ENCODE measurements at regions of chr7 and their contacts with region 1.

Region 1: GRCh38 chr7:151315038-151315655 is 26.5 kb upstream of the NUB1 start:
- DNase-seq: peak; percentile 75
- ATAC-seq: peak; percentile 76
- H3K4me3 Mint-ChIP-seq: no peak overlapping the region
- H3K27ac Mint-ChIP-seq: no peak overlapping the region
- H3K4me1 Mint-ChIP-seq: no peaks in the 10 kb centered on the region
- H3K27me3 Mint-ChIP-seq: peaks cover 6% of the 10 kb centered on the region
- CTCF ChIP-seq: peak; percentile 83

Region 2: DNA sequence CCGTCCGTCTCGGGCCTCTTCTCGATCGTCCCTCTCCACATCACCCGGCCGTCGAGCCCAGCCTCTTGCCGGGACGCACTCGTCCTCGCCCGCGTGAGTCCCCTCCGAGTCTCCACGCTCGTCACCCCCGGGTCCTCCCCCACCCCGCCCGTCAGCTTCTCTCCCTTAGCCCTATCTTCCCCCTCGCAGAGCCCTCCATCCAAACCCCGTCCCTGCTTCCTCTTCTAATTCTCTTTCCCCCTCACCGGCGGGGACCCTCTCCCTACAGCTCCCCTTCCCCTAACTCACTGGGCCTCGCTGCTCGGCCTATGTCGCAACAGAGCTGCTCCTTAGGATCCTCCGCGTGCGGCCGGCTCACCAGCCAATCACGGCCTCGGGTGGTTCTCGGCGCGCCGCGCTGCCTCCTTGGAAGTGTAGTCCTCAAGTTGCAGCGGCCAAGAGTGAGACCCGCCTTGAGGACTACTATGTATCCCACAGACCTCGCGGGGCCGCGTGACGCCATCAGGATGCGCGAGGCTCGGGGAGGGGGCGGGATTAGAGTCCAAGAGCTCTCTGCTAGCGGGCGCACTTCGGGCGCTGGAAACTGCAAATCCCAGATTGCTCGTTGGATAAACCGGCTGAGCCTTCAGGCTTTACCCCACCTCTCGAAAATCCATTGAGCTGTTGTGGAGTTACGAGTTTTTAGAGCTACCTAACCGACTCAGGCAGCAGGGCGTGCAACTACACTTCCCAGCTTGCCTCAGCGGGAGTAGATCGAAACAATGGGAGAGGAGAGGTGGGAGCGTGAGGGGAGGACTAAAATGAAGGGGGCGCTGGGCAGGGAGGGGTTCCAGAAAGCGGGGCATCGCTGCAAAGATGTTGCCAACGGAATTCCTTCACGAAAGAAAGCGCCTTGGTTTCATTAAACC is 88.0 kb before region 1 on chr7 and contains the start of gene ABCF2:
- CTCF ChIA-PET with region 1: interaction called, 11 read pairs
- POLR2A ChIA-PET with region 1: no interaction called
- DNase-seq: peak; percentile 100
- ATAC-seq: peak; percentile 98
- H3K4me3 Mint-ChIP-seq: peak within 1 kb of the TSS; percentile 95
- H3K27ac Mint-ChIP-seq: peak within 1 kb of the TSS; percentile 100
- H3K4me1 Mint-ChIP-seq: peaks cover 30% of the 10 kb centered on the region
- H3K27me3 Mint-ChIP-seq: no peaks in the 10 kb centered on the region
- CTCF ChIP-seq: no peak
- total RNA-seq, gene ABCF2: 41.3 to 43.7 TPM (median 43.5 TPM) in 3 replicates

Region 3: DNA sequence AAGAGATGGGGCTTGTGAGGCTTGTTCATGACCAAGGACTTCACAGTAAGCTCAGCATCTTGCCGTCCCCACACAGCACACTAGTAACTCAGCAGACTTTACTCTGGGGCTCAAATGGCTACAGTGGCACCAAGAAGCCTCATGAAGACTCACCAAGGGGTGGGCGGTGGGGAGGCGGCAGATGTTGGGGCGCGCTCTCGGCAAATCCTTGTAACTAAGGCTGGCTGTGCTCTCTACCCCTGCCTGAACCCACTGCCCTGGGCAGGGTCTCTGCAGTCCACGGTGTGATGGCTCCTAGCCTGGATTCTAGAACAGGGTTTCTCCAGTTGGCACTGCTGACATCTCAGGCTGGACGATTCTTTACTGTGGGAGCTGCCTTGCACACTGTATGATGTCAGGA is 54.3 kb before region 1 on chr7:
- CTCF ChIA-PET with region 1: no interaction called
- POLR2A ChIA-PET with region 1: no interaction called
- DNase-seq: no peak
- ATAC-seq: no peak
- H3K4me3 Mint-ChIP-seq: no peak overlapping the region
- H3K27ac Mint-ChIP-seq: no peak overlapping the region
- H3K4me1 Mint-ChIP-seq: peaks cover 10% of the 10 kb centered on the region
- H3K27me3 Mint-ChIP-seq: peaks cover 34% of the 10 kb centered on the region
- CTCF ChIP-seq: no peak

Region 4: DNA sequence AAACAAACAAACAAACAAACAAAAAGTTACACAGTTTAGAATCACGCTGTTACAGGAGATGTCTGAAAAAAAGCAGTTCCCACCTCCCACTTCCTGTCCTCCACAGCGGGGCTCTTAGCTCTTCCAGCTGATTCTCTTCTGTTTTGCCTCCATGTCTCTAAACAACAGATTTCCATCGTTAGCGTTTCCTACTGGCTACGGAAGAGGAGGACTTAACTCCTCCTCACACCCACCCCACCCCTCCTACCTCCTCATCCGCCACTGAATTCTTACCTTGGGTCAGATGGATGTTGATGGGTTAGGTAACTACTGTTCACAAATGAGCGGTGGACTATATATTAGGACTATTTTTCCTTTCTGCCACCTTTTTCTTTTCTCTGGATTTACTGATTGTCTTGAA is 10.3 kb before region 1 on chr7:
- CTCF ChIA-PET with region 1: interaction called, 27 read pairs
- POLR2A ChIA-PET with region 1: no interaction called
- DNase-seq: no peak
- ATAC-seq: peak; percentile 71
- H3K4me3 Mint-ChIP-seq: peak overlapping the region; percentile 73
- H3K27ac Mint-ChIP-seq: peak overlapping the region; percentile 95
- H3K4me1 Mint-ChIP-seq: peaks cover 14% of the 10 kb centered on the region
- H3K27me3 Mint-ChIP-seq: peaks cover 23% of the 10 kb centered on the region
- CTCF ChIP-seq: no peak

Region 5: DNA sequence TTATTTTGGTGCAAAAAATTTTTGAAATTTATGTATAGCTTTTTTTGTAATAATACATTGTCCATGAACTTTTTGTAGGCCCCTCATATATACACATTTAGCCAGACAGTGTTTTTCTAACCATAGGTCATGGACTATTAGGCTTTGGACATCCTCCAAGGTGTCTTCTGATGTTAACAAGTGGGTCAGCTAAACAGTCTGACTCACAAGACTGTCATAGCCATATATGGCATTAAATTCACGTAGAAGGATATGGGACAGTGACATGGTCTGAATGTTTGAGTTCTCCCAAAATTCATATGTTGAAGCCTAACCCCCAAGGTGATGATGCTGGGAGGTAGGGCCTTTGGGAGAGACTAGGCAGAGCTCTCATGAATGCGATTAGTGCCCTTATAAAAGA is 12.5 kb after region 1 on chr7:
- CTCF ChIA-PET with region 1: interaction called, 10 read pairs
- POLR2A ChIA-PET with region 1: no interaction called
- DNase-seq: no peak
- ATAC-seq: no peak
- H3K4me3 Mint-ChIP-seq: no peak overlapping the region
- H3K27ac Mint-ChIP-seq: no peak overlapping the region
- H3K4me1 Mint-ChIP-seq: peaks cover 19% of the 10 kb centered on the region
- H3K27me3 Mint-ChIP-seq: peaks cover 3% of the 10 kb centered on the region
- CTCF ChIP-seq: no peak

Region 6: GRCh38 chr7:151341357-151342101 is 26.4 kb after region 1 on chr7 and contains the start of gene NUB1:
- CTCF ChIA-PET with region 1: interaction called, 35 read pairs
- POLR2A ChIA-PET with region 1: no interaction called
- DNase-seq: peak; percentile 93
- ATAC-seq: peak; percentile 97
- H3K4me3 Mint-ChIP-seq: peak within 1 kb of the TSS; percentile 76
- H3K27ac Mint-ChIP-seq: peak within 1 kb of the TSS; percentile 76; the same call in 1 of the 2 replicates
- H3K4me1 Mint-ChIP-seq: peaks cover 3% of the 10 kb centered on the region; the same call in 1 of the 2 replicates
- H3K27me3 Mint-ChIP-seq: peaks cover 14% of the 10 kb centered on the region
- CTCF ChIP-seq: no peak
- total RNA-seq, gene NUB1: 31.2 to 38.3 TPM (median 33.5 TPM) in 3 replicates

Region 7: DNA sequence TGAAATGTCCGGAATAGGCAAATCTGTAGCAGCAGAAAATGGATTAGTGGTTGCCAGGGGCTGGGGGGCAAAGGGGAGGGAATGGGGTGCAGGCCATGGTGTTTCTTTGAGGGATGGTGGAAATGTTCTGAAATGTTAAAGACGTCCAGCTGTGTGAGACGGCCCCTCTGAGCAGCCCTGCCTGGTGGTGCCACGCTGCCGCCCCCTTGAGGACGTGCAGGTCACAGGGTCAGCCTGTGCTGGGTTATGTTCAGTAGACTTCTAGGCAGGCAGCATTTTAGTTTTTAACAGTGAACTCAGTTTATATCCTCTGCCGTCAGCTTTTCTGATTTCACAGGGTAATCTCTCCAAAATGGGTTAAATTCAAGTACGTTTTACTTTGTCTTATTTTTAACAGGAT is 35.9 kb after region 1 on chr7:
- CTCF ChIA-PET with region 1: interaction called, 71 read pairs
- POLR2A ChIA-PET with region 1: interaction called, 3 read pairs
- DNase-seq: peak; percentile 75
- ATAC-seq: peak; percentile 96
- H3K4me3 Mint-ChIP-seq: no peak overlapping the region
- H3K27ac Mint-ChIP-seq: no peak overlapping the region
- H3K4me1 Mint-ChIP-seq: no peaks in the 10 kb centered on the region
- H3K27me3 Mint-ChIP-seq: no peaks in the 10 kb centered on the region
- CTCF ChIP-seq: peak; percentile 53

Region 8: GRCh38 chr7:151448261-151449252 is 133.4 kb after region 1 on chr7:
- CTCF ChIA-PET with region 1: interaction called, 17 read pairs
- POLR2A ChIA-PET with region 1: no interaction called
- DNase-seq: peak; percentile 82
- ATAC-seq: peak; percentile 80
- H3K4me3 Mint-ChIP-seq: peak overlapping the region; percentile 60
- H3K27ac Mint-ChIP-seq: no peak overlapping the region
- H3K4me1 Mint-ChIP-seq: peaks cover 20% of the 10 kb centered on the region
- H3K27me3 Mint-ChIP-seq: peaks cover 15% of the 10 kb centered on the region
- CTCF ChIP-seq: peak; percentile 72

Region 9: GRCh38 chr7:151484971-151485707 is 170.0 kb after region 1 on chr7:
- CTCF ChIA-PET with region 1: no interaction called
- POLR2A ChIA-PET with region 1: no interaction called
- DNase-seq: no peak
- ATAC-seq: no peak
- H3K4me3 Mint-ChIP-seq: no peak overlapping the region
- H3K27ac Mint-ChIP-seq: peak overlapping the region; percentile 34; the same call in 1 of the 2 replicates
- H3K4me1 Mint-ChIP-seq: peaks cover 46% of the 10 kb centered on the region
- H3K27me3 Mint-ChIP-seq: no peaks in the 10 kb centered on the region
- CTCF ChIP-seq: no peak

Measured in WTC11 (cell line).